ENCODE measurements at regions of chr16 and their contacts with region 1.

Region 1: GRCh38 chr16:1863681-1864460 is 8.1 kb downstream of the MEIOB start:
- DNase-seq: no peak
- H3K4me3 ChIP-seq: no peak overlapping the region
- H3K27ac ChIP-seq: no peak overlapping the region
- H3K4me1 ChIP-seq: no peaks in the 10 kb centered on the region
- H3K27me3 ChIP-seq: peaks cover 0 to 3% (median under 1%) of the 10 kb centered on the region in 4 experiments; a peak in 5 of 7 replicates
- CTCF ChIP-seq: peak in 2 of 3 experiments; percentile 8 to 31; a peak in 3 of 4 replicates
- EP300 ChIP-seq: no peak
- POLR2A ChIP-seq: no peak
- RAD21 ChIP-seq: peak; percentile 45 to 58

Region 2: DNA sequence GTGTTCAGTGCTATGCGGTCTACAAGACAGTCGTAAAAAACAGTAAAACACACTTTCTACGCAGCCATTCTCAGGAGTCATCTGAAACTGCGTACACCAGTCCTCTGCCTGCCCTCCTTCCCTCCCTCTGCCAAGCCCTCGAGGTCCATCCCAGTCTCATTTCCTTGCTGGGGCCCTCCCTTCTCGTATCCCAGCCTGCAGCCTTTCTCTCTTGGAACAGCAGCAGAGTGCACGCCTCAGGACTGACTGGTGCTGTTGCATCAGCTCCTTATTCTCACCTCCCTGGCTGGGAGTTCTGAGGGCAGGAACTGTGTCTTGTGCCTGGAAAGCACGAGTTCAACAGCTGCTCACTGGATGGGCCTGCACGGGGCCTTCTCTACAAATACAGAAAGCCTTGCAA is 24.3 kb before region 1 on chr16:
- CTCF ChIA-PET with region 1: interaction called, 10 read pairs
- POLR2A ChIA-PET with region 1: no interaction called
- DNase-seq: no peak
- H3K4me3 ChIP-seq: no peak overlapping the region
- H3K27ac ChIP-seq: no peak overlapping the region
- H3K4me1 ChIP-seq: no peaks in the 10 kb centered on the region
- H3K27me3 ChIP-seq: no peaks in the 10 kb centered on the region; a peak in 2 of 7 replicates
- CTCF ChIP-seq: no peak
- EP300 ChIP-seq: no peak
- POLR2A ChIP-seq: no peak
- RAD21 ChIP-seq: no peak

Measured in H1 (cell line).